CD8-positive, alpha-beta T cell (primary cell): ENCODE measurements at regions of chr2 and their contacts with region 1.

Region 1: DNA sequence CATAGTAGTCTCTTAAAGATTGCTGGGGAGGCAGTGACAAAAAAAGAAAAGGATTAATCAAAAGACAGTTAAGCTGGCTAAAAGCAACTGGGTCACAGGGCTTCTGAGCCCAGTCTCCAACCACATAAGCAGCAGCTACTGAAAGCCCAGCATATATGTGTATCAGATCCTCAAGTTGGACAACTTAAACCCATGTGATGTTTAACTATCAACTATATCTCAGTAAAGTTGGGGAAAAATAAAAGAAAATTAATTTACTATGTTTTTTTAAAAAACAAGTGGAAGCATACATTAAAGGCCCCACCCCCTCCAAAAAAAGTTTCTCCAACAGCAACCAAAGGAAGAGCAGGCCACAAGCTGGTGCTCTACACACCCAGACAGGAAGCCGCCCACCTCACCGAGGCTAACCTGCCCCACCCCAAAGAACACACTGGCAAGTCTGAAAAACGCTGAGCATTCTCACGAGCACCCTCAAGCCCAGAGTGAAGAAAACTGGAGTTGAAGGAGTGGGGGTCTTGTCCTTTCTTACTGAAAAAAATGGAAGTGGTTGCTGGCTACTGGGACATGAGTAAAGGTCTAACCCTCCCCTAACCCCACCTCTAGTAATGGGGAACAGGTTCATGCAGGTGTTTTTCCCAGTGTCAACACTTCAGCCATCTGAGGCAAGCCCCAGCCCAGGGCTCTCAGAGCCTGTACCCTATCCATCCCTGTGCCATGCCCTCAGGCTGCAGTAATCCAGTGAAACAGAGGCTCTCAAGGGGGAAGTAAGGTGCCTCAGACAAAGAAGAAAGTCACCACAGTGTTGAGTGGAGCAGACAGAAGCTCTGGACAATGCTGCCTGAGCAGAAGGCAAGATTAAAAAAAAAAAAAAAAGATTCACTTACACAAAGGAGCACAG is 106.3 kb downstream of the GYPC start:
- DNase-seq: peak; percentile 22 to 81 (median 62)
- ATAC-seq: peak; percentile 93
- H3K4me3 ChIP-seq: peak overlapping the region; percentile 9 to 36
- H3K4me3 Mint-ChIP-seq: peak overlapping the region; percentile 76
- H3K27ac ChIP-seq: peak overlapping the region; percentile 49 to 64
- H3K27ac Mint-ChIP-seq: peak overlapping the region; percentile 97
- H3K4me1 ChIP-seq: peaks cover 53% of the 10 kb centered on the region
- H3K4me1 Mint-ChIP-seq: peaks cover 83% of the 10 kb centered on the region
- H3K27me3 ChIP-seq: no peaks in the 10 kb centered on the region
- H3K27me3 Mint-ChIP-seq: no peaks in the 10 kb centered on the region
- CTCF ChIP-seq: no peak

Region 2: GRCh38 chr2:126719833-126720351 is 42.3 kb before region 1 on chr2:
- CTCF ChIA-PET with region 1: no interaction called
- POLR2A ChIA-PET with region 1: no interaction called
- intact Hi-C with region 1: loop called in 1 of 2 experiments (anchors 10 kb)
- DNase-seq: peak in 1 of 9 experiments; percentile 5
- ATAC-seq: no peak
- H3K4me3 ChIP-seq: no peak overlapping the region
- H3K4me3 Mint-ChIP-seq: no peak overlapping the region
- H3K27ac ChIP-seq: no peak overlapping the region
- H3K27ac Mint-ChIP-seq: no peak overlapping the region
- H3K4me1 ChIP-seq: no peaks in the 10 kb centered on the region
- H3K4me1 Mint-ChIP-seq: peaks cover 4% of the 10 kb centered on the region
- H3K27me3 ChIP-seq: no peaks in the 10 kb centered on the region
- H3K27me3 Mint-ChIP-seq: no peaks in the 10 kb centered on the region
- CTCF ChIP-seq: no peak

Region 3: DNA sequence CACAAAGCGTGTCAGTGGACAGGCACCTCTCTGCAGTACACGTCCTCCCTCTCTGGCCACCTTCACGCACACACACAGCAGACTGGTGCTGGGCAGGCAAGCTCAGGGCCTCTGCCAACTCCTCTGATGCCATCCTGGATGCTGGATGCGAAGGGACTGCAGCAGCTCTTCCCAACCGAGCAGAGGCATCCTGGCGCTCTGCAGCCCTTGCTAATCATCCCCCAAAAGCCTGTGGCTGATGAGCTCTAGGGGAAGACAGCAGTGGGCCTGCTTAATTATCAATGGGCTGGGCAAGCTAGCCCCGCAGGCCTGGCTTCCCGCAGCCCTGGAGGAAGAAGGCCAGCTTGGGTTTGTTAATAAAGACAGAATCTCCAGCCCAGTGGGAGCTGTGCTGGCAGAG is 65.1 kb after region 1 on chr2:
- CTCF ChIA-PET with region 1: no interaction called
- POLR2A ChIA-PET with region 1: no interaction called
- intact Hi-C with region 1: no loop called
- DNase-seq: no peak
- ATAC-seq: no peak
- H3K4me3 ChIP-seq: no peak overlapping the region
- H3K4me3 Mint-ChIP-seq: no peak overlapping the region
- H3K27ac ChIP-seq: no peak overlapping the region
- H3K27ac Mint-ChIP-seq: no peak overlapping the region
- H3K4me1 ChIP-seq: no peaks in the 10 kb centered on the region
- H3K4me1 Mint-ChIP-seq: no peaks in the 10 kb centered on the region
- H3K27me3 ChIP-seq: peaks cover 0 to 2% of the 10 kb centered on the region in 2 experiments
- H3K27me3 Mint-ChIP-seq: peaks cover 6% of the 10 kb centered on the region
- CTCF ChIP-seq: no peak

Region 4: DNA sequence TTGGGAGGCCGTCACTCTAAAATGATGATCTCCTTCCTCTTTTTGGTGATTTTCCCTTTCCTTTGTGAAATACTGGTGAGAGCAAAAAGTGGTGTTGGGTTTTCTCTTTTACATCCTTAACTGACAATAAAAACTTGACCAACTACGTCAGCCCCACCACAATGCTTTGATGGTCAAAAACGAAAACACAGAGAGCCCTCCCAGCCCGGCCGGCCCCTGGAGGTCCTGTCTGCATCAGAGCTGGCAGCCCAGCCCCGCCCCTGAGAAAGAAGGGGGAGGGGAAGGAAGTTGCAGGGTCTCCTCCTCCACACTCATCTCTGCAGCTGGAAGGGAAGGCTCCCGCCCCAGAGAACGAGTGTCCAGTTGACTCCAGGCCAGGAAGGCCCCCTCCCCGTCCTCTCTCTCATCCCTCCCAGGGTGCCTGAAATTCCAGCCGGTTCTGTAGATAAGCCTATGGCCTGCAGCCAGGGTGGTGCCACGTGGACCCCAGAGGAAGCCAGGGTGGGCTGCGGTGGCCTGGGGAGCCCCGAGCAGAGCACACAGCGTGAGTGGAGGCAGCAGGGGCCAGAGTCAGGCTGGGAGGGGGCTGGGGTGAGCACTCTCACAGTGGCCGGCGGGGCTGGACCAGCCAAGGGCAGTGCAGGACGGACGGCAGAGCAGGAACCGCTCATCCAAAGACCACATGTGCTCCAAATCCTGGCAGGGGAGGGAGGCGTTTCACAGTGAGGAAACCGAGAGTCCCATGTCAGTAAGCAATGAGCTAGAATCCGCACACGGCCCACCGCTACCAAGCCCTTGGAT is 325.0 kb after region 1 on chr2:
- CTCF ChIA-PET with region 1: no interaction called
- POLR2A ChIA-PET with region 1: no interaction called
- intact Hi-C with region 1: loop called in 1 of 2 experiments (anchors 10 kb)
- DNase-seq: no peak
- ATAC-seq: no peak
- H3K4me3 ChIP-seq: no peak overlapping the region
- H3K4me3 Mint-ChIP-seq: no peak overlapping the region
- H3K27ac ChIP-seq: peak overlapping the region in 1 of 2 experiments; percentile 51
- H3K27ac Mint-ChIP-seq: peak overlapping the region; percentile 84
- H3K4me1 ChIP-seq: peaks cover 53% of the 10 kb centered on the region
- H3K4me1 Mint-ChIP-seq: peaks cover 49% of the 10 kb centered on the region
- H3K27me3 ChIP-seq: no peaks in the 10 kb centered on the region
- H3K27me3 Mint-ChIP-seq: no peaks in the 10 kb centered on the region
- CTCF ChIP-seq: no peak